HepG2 (cell line): ENCODE measurements at regions of chr18 and their contacts with region 1.

Region 1: DNA sequence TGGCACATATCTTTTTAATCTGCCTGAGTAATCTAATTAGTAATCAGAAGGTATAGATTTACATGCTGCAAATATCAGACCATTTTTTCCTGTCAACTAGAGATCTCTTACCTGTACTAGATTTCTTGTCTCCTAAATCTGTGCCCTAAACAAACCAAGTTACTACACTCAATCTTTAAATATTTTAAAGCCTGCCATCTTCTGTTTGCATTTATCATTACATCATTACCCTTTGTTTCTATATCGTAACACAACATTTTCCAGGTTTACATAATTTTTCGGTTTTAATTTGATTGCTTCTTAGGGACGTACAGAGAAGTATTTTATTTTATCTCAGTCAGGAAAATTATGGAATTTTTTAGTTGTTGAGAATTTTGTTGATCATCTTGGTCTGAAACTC is 25.7 kb downstream of the PSMA8 start:
- DNase-seq: no peak
- ATAC-seq: no peak
- H3K4me3 ChIP-seq: no peak overlapping the region
- H3K27ac ChIP-seq: no peak overlapping the region
- H3K4me1 ChIP-seq: no peaks in the 10 kb centered on the region
- H3K27me3 ChIP-seq: 0 out of 5 replicates have a peak, but pooled peaks cover 0 to 3% of the 10 kb centered on the region in 2 experiments
- CTCF ChIP-seq: no peak
- EP300 ChIP-seq: no peak
- POLR2A ChIP-seq: no peak
- RAD21 ChIP-seq: no peak

Region 2: DNA sequence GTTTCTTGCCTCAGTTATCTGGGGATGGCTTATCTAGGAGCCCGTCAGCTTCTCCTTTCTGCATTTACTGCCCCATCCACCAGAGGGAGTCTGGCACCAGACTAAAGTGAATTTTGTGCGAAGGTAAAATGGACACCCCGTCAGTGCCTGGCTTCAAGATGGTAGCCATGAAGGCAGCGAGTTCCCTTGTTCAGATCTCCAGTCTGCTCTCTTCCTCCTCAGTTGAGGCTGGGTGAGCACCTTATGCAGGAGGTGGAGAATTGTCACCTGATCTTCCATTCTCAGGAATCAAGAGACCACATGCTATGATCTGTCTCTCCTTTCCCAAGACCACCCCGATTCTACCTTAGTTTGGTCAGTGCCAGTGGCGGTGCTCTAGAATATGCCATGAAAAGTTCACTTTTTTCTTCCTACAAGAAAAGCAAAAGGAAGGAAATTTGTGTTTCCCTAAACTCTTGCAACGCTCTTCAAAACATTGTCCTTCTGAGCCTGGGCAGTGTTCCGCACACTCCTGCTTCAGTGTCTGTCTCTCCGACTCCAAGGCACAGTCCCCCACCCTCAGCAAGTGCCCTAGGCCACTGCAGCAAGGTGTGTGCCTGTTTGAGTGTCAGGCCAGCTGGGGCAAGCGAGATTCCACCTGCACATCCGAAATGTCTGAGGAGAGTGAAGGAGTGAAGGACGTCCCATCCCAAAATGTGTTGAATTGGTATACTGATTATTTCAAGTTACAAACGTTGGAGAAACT is 237.5 kb before region 1 on chr18:
- CTCF ChIA-PET with region 1: interaction called, 4 read pairs
- POLR2A ChIA-PET with region 1: no interaction called
- in situ Hi-C with region 1: no loop called
- intact Hi-C with region 1: loop called (anchors 1 kb)
- DNase-seq: peak; percentile 31
- ATAC-seq: peak; percentile 87
- H3K4me3 ChIP-seq: 0 out of 6 replicates have a peak overlapping the region, but pooled peaks of 1 of the 3 experiments have one; percentile 18
- H3K27ac ChIP-seq: no peak overlapping the region
- H3K4me1 ChIP-seq: no peaks in the 10 kb centered on the region
- H3K27me3 ChIP-seq: no peaks in the 10 kb centered on the region
- CTCF ChIP-seq: peak; percentile 68
- EP300 ChIP-seq: no peak
- POLR2A ChIP-seq: no peak
- RAD21 ChIP-seq: 0 out of 2 replicates have a peak, but pooled peaks have one; percentile 23